Dorsolateral prefrontal cortex (tissue), 120 donors: ENCODE measurements at regions of chr6 and their contacts with region 1.

Region 1: DNA sequence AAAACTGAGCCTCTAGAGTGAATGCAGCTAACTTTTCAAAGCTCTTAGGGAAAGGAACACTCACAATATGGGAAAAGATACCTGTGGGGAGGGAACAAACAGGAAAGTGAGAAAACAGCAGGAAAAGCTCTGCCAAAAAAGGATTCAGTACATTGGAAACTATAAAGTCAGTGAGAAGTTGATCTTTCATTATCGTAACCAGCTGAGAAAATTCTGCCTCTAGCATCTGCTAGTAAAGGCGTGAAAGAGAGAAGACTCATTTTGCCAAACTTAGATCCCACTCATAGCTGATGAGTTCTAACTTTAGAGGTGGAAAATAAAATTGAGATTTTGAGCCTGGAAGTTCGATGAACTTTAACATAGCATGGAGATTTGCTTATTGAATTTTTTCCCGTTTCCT is 321.8 kb upstream of the RNF217 start:
- DNase-seq: no peak
- H3K4me3 ChIP-seq: no peak overlapping the region
- H3K27ac ChIP-seq: no peak overlapping the region
- H3K27me3 ChIP-seq: no peaks in the 10 kb centered on the region
- CTCF ChIP-seq: no peak

Region 2: DNA sequence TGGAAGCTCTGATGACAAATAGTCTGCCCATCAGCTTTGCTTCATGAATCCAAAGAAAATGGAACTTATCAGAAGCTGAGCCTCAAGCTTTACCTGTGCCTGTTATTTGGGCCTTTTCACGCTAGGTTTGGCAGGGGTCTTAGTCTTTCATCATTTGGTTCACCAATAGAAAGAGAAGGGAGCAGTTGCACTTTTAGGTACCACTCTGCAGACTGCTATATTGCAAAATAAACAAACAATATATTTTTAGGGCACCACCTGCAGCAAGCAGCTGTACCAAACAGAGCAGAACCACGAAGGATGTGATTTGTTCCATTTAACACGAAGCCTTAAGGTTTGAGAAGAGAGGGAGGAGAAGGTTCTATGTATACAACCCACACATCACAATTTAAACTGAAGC is 30.4 kb after region 1 on chr6:
- intact Hi-C with region 1: loop called in 1 of 2 experiments (anchors 1 kb)
- DNase-seq: no peak
- H3K4me3 ChIP-seq: no peak overlapping the region
- H3K27ac ChIP-seq: peak overlapping the region in 44 of 59 donors; percentile 6 to 76 (median 54)
- H3K27me3 ChIP-seq: no peaks in the 10 kb centered on the region
- CTCF ChIP-seq: no peak